Calu3 (cell line): ENCODE measurements at regions of chr11 and their contacts with region 1.

Region 1: GRCh38 chr11:59283825-59284772 is 71.4 kb upstream of the MPEG1 start:
- DNase-seq: peak; percentile 50
- H3K4me3 Mint-ChIP-seq: no peak overlapping the region
- H3K27ac Mint-ChIP-seq: no peak overlapping the region
- H3K4me1 Mint-ChIP-seq: no peaks in the 10 kb centered on the region
- H3K27me3 Mint-ChIP-seq: peaks cover 40% of the 10 kb centered on the region
- CTCF ChIP-seq: peak; percentile 58

Region 2: DNA sequence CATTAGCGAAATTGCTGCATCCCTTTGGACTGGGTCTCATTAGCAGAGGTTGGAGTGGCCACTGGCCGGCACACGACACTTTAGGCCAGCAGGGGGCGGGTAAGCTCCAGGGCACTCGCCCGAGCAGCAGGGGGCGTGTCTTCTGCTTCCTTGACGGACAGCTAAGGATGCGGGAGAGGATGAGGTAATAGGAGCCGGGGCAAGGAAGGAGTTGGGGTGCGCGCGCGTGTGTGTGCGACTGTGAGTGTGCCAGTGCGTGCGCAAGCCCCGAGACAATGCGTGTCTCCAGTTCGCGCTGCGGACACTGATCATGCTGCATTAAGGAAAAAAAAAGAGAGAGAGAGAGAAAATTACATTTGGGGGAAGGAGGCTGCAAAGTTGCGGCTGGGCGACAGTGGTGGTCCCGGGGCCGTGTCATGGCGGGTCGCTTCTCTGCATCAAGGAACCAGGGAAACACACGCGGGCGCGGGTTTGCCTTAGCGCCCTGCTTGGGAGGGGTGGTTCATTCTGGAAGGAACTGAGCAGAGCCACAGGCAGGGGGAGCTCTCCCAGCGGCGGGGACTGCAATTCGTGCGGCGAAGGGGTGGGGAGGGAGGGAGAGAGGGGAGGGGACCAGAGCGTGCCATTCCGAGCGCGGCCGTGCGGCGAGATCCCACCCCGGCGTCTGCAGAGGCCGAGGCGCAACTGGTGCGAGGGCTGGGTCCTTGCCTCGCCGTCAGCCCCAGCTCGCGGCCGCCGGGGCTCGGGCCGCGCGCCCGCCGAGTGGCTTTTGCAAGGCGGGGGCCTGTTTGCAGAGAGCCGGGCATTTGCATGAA is 112.4 kb before region 1 on chr11 and contains the start of gene DTX4:
- CTCF ChIA-PET with region 1: no interaction called
- intact Hi-C with region 1: loop called (anchors 2 kb)
- DNase-seq: peak; percentile 96
- H3K4me3 Mint-ChIP-seq: no peak within 1 kb of the TSS
- H3K27ac Mint-ChIP-seq: peak within 1 kb of the TSS; percentile 82
- H3K4me1 Mint-ChIP-seq: peaks cover 24% of the 10 kb centered on the region
- H3K27me3 Mint-ChIP-seq: no peaks in the 10 kb centered on the region
- CTCF ChIP-seq: peak; percentile 78
- total RNA-seq, gene DTX4: 56.7 and 65.8 TPM in 2 replicates

Region 3: DNA sequence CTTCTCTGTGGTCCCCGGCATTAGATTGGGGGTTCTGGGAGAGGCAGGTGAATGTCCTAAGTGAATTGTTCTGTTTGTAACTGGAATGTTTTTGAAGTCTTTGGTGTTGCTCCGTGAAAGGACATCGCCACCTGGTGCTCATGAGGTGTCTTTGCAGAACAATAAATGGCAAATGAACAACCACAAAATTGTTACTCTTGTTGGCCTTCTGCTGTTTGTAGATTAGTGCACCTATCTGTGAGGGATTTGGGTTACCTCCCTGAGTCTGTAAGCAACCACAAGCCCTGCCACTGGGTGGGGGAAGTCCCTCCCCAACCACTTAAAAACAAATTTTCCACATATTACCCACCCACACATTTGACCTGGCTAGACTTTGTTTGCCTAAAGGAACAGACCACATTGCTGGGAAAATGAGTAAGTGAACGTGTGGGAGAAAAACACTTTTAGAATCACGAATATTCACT is 76.1 kb before region 1 on chr11:
- CTCF ChIA-PET with region 1: no interaction called
- intact Hi-C with region 1: loop called (anchors 5 kb)
- DNase-seq: peak; percentile 34
- H3K4me3 Mint-ChIP-seq: no peak overlapping the region
- H3K27ac Mint-ChIP-seq: peak overlapping the region; percentile 58
- H3K4me1 Mint-ChIP-seq: peaks cover 6% of the 10 kb centered on the region
- H3K27me3 Mint-ChIP-seq: no peaks in the 10 kb centered on the region
- CTCF ChIP-seq: peak; percentile 76

Region 4: DNA sequence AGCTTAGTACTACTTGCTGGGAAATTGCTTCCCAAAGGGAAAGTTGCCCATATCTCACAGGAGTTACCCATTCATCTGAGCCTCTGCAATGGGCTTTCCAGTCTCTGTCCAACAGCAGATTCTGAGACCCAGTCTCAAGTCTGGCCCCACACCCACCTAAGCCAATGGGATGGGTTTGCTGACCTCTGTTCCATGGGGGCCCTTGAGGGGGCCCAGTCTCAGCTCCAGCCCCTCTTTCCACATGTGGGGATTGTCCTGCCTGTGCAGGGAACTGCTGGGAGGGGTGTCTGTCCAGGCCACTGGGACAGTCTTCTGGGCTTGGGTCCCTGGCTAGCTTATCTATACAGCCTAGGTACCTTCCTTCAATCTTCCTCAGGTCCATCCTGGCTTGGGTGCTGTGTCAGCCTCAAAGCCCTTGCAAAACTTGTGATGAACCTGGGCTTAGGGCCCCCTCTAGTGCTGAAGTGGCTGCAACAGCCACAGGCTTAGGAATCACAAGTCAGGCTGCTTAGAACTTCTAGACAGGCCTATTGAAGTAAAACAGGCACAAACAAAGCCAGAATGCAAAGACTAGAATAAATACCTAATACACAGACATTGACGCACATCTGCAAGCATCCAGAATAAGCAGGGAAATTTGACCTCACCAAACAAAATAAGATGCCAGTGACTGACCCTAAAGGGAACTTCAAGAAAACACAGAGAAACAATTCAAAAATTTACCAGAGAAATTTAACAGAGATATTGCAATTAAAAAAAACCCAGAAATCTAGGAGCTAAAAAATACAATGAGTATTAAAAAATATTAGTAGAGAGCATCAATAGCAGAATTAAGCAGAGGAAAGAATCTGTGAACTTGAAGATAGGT is 396.4 kb after region 1 on chr11:
- CTCF ChIA-PET with region 1: no interaction called
- intact Hi-C with region 1: loop called (anchors 10 kb)
- DNase-seq: peak; percentile 77
- H3K4me3 Mint-ChIP-seq: no peak overlapping the region
- H3K27ac Mint-ChIP-seq: no peak overlapping the region
- H3K4me1 Mint-ChIP-seq: peaks cover 20% of the 10 kb centered on the region
- H3K27me3 Mint-ChIP-seq: no peaks in the 10 kb centered on the region
- CTCF ChIP-seq: peak; percentile 65